ENCODE measurements at regions of chr1 and their contacts with region 1.

Region 1: GRCh38 chr1:1100296-1100695 is 15.6 kb downstream of the C1orf159 start:
- DNase-seq: peak in 1 of 2 donors; percentile 28
- H3K4me3 ChIP-seq: no peak overlapping the region
- H3K27ac ChIP-seq: no peak overlapping the region
- H3K4me1 ChIP-seq: no peaks in the 10 kb centered on the region
- H3K27me3 ChIP-seq: no peaks in the 10 kb centered on the region
- CTCF ChIP-seq: no peak
- POLR2A ChIP-seq: no peak

Region 2: DNA sequence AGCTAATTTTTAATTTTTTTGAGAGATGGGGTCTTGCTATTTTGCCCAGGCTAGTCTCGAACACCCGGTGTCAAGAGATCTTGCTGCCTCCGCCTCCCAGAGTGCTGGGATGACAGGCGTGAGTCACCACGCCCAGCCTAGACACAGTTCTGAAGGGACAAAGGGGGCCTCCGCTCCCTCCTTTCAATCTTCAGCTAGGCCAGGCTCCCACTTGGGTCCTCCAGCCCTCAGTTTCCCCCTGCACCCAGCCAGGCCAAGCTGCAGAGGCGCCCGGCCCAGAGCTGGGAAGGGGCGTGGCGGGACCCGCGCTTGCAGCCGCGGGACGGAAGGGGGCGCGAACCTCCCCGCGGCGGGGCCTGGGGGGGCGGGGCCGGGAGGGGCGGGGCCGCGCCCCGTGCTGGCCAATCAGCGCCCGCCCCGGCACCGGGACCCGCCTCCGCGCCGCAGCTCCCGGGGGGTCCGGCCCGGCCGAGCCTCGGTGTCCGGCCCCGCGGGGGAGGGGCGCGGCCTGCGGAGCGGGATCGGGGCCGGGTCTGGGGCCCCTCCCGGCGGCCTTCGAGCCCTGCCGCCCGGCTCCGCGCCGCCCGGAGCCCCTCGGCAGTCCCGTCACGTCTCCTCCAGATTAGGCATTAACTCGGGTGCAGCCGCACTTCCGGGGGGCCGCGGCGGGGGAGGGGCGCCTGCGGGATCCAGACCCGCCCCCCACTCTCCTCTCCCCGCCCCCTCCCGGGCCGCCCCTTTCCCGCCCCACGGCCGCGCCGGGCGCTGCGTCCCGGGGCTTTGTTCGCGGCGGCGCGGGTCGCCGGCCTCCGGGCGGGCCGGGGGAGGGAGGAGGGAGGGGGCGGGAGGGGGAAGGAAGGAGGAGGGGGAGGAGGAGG is 80.9 kb before region 1 on chr1:
- intact Hi-C with region 1: no loop called
- DNase-seq: peak; percentile 80 to 81
- H3K4me3 ChIP-seq: peak overlapping the region; percentile 61 to 84 (median 80)
- H3K27ac ChIP-seq: peak overlapping the region; percentile 92 to 98
- H3K4me1 ChIP-seq: peaks cover 2 to 17% of the 10 kb centered on the region in 2 donors
- H3K27me3 ChIP-seq: no peaks in the 10 kb centered on the region
- CTCF ChIP-seq: no peak
- POLR2A ChIP-seq: no peak

Region 3: DNA sequence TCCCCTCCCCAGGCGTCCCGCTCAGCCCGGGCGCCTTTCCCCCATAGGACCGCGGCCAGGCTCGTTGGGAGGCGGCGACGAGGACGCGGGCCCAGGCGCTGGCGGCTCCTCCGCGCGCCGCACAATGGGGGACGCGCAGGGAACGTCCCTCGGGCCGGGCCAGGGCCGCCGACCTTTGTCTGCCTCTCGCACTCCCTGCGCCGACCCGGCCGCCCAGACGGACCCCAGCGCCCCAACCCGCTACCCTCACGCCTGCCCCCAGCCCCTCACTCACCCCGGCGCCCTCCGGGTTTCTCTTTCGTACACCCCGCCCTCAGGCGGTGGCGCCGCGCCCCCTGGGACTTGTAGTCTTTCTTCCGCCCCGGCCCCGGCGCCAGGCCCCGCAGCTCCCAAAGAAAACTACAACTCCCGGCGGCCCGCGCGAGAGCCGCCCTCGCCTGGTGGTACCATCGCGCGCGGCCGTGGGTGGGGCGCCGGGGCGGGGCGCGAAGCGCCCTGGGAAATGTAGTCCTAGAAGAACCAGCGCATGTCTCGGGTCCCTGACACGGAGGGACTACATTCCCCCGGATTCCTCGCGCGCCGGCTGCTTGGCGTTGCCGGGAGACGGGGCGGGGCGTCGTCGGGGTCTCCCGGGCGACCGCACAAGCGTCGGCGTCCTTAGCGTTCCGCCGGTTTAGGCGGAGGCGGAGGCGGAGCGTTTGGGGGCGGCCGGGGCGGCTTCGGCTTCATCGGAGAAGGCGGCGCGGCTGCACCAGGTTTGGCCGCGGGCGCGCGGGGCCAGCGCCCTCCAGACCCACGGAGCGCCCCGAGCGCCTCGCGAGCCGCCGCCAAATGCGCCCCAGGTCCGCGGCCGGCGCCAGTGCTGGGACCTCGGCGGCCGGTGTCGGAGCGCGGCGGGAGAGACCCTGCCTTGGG is 15.7 kb after region 1 on chr1 and contains the start of gene C1orf159:
- intact Hi-C with region 1: no loop called
- DNase-seq: peak; percentile 98 to 99
- H3K4me3 ChIP-seq: peak within 1 kb of the TSS; percentile 76 to 99 (median 94)
- H3K27ac ChIP-seq: peak within 1 kb of the TSS; percentile 87 to 89
- H3K4me1 ChIP-seq: peaks cover 0 to 2% of the 10 kb centered on the region in 2 donors
- H3K27me3 ChIP-seq: no peaks in the 10 kb centered on the region
- CTCF ChIP-seq: peak in 2 of 3 donors; percentile 3 to 26
- POLR2A ChIP-seq: no peak
- total RNA-seq, gene C1orf159: 6.9 to 24.0 (median 12.5) TPM

Region 4: DNA sequence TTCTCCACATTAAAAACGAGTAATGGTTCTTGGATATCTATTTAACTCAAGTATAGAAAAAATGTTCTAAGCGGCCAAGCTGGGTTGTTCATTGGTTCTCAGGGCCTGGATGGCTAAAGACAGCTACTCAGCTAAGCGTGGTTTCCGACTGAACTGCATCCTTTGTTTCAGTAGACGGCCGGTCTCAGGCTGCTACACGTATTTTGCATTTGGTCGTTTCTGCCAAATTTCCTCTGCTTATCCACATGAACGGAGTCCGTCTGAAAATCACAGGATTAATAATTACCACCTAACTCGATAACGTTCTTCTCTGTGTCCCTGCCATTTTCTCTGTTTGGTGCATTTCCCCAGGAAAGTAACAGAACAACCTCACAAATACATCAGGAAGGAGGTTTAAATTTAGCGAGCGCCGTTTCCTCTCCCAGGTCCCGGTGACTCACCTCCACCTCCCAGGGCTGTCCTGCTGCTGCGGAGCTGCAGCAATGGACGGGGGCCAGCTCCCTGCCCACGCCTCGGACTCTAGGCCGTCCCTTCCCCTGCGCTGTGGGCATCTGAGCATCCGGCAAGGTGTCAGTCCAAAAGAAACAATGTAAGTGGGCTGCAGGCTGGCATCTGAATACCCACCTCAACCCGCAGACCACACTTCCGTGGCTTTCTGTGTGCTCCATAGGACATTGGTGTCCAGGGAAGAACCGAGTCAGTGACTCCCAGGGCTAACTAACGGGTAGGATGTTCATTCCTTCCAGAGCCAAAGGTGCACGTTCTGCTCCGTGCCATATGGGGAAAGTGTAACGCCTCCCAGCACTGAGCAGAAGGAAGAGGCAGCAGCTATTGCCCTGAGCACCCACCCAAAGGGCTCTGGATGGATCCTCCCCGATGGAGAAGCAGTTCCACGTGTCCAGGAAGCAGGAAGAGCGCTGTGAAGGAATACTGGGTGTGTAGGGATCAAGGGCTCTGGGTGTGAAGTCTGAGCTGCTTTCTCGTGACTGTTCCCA is 914.7 kb after region 1 on chr1:
- intact Hi-C with region 1: loop called (anchors 5 kb)
- DNase-seq: no peak
- H3K4me3 ChIP-seq: peak overlapping the region in 2 of 3 donors; percentile 15 to 37
- H3K27ac ChIP-seq: no peak overlapping the region
- H3K4me1 ChIP-seq: peaks cover 6 to 7% of the 10 kb centered on the region in 2 donors
- H3K27me3 ChIP-seq: peaks cover 4 to 12% of the 10 kb centered on the region in 2 donors
- CTCF ChIP-seq: no peak
- POLR2A ChIP-seq: no peak

Measured in breast epithelium (tissue), 4 donors.